Mucosa of descending colon (tissue), 3 donors: ENCODE measurements at regions of chr14 and their contacts with region 1.

Region 1: GRCh38 chr14:25150934-25151790 is 101.2 kb upstream of the STXBP6 start:
- DNase-seq: peak in 1 of 3 donors; percentile 4
- ATAC-seq: peak; percentile 51
- H3K4me3 ChIP-seq: no peak overlapping the region
- H3K4me1 ChIP-seq: no peaks in the 10 kb centered on the region
- CTCF ChIP-seq: peak; percentile 63

Region 2: GRCh38 chr14:24734878-24735500 is 416.2 kb before region 1 on chr14:
- intact Hi-C with region 1: loop called in 1 of 2 experiments (anchors 10 kb)
- DNase-seq: peak in 1 of 3 donors; percentile 81
- ATAC-seq: peak; percentile 75
- H3K4me3 ChIP-seq: no peak overlapping the region
- H3K4me1 ChIP-seq: no peaks in the 10 kb centered on the region
- CTCF ChIP-seq: peak; percentile 50